ENCODE measurements at regions of chr18 and their contacts with region 1.

Region 1: DNA sequence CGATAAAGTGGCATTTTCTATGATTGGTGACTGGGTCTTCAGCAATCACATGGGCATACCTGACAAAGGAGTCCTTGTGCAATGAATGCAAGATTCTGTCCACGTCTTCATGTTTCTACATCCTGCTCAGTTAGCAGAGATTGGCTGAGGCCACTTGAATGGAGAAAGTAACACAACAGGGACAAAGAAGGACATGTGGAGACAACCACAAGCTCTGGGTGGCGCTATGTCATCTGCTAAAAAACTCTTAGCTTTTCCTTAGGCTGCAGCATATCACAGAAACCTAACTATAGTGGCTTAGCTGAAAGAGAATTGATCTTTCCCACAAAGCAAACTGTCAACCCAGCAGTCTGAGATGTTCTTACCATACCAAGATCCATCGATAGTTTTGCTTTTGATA is 1109.7 kb downstream of the SOCS6 start:
- DNase-seq: peak; percentile 35
- H3K4me3 ChIP-seq: no peak overlapping the region
- H3K27ac ChIP-seq: no peak overlapping the region
- H3K4me1 ChIP-seq: no peaks in the 10 kb centered on the region
- H3K27me3 ChIP-seq: no peaks in the 10 kb centered on the region
- CTCF ChIP-seq: peak; percentile 9 to 51
- POLR2A ChIP-seq: no peak

Region 2: DNA sequence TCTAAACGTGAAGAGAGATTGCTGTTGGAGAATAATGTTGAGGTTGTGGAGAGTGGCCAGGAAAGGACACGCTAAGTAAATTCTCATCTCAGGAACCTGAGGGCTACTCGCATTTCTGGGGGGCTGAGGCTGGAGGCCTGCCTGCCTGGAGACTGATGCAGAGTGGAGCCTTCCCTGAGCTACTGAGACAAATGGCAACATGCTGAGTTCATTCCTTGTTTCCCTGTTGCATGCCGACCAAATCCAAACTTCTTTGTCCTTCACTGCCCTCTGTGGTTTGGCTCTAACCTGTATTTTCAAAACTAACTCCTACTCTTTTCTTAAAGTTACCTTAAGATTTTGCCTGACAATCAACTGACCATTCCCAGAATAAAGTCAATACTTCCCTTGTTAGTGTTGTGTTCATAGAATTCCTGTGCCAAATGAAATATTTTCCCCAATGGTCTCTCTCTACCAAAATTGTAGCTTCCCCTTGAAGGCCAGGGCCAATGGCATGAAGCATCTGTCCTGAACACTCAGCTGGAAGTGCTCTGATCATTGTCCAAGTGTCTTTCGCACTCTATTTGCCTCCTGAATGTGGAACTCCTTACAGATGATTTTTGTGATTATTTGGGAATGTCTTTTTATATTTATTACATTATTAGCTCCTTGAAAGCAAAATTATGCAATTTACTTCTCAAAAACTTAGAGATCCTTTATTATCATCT is 24.1 kb before region 1 on chr18:
- CTCF ChIA-PET with region 1: interaction called, 13 read pairs
- POLR2A ChIA-PET with region 1: no interaction called
- dilution Hi-C with region 1: no loop called
- intact Hi-C with region 1: no loop called
- DNase-seq: no peak
- H3K4me3 ChIP-seq: no peak overlapping the region
- H3K27ac ChIP-seq: no peak overlapping the region
- H3K4me1 ChIP-seq: no peaks in the 10 kb centered on the region
- H3K27me3 ChIP-seq: no peaks in the 10 kb centered on the region
- CTCF ChIP-seq: no peak
- POLR2A ChIP-seq: no peak

Region 3: DNA sequence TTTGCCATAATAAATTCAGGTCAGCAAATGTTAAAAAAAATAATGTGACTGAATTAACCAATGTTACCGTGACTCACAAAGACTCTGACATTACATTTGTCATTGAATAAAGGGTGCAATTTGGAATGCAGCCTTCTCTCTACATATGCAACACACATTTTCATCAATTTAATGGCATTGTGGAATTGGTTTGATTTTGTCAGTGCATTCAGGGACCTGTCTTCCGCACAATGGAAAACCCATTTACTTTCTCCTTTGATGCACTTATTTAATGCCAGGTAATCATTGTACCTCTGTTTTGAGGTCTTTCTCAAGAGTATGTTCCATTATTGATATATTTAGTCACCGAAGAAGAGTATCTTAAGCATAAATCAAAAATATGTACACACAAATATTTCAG is 10.4 kb before region 1 on chr18:
- CTCF ChIA-PET with region 1: interaction called, 14 read pairs
- POLR2A ChIA-PET with region 1: no interaction called
- dilution Hi-C with region 1: no loop called
- intact Hi-C with region 1: no loop called
- DNase-seq: no peak
- H3K4me3 ChIP-seq: no peak overlapping the region
- H3K27ac ChIP-seq: no peak overlapping the region
- H3K4me1 ChIP-seq: no peaks in the 10 kb centered on the region
- H3K27me3 ChIP-seq: no peaks in the 10 kb centered on the region
- CTCF ChIP-seq: no peak
- POLR2A ChIP-seq: no peak

Region 4: GRCh38 chr18:71784777-71785176 is 386.2 kb after region 1 on chr18:
- CTCF ChIA-PET with region 1: interaction called, 27 read pairs
- POLR2A ChIA-PET with region 1: no interaction called
- dilution Hi-C with region 1: no loop called
- intact Hi-C with region 1: loop called (anchors 1 kb)
- DNase-seq: peak; percentile 51
- H3K4me3 ChIP-seq: no peak overlapping the region
- H3K27ac ChIP-seq: no peak overlapping the region
- H3K4me1 ChIP-seq: no peaks in the 10 kb centered on the region
- H3K27me3 ChIP-seq: no peaks in the 10 kb centered on the region
- CTCF ChIP-seq: peak; percentile 41 to 62
- POLR2A ChIP-seq: no peak

Region 5: GRCh38 chr18:72086421-72086820 is 687.9 kb after region 1 on chr18:
- CTCF ChIA-PET with region 1: no interaction called
- POLR2A ChIA-PET with region 1: no interaction called
- dilution Hi-C with region 1: no loop called
- intact Hi-C with region 1: loop called (anchors 1 kb)
- DNase-seq: peak; percentile 39
- H3K4me3 ChIP-seq: no peak overlapping the region
- H3K27ac ChIP-seq: no peak overlapping the region
- H3K4me1 ChIP-seq: no peaks in the 10 kb centered on the region
- H3K27me3 ChIP-seq: no peaks in the 10 kb centered on the region
- CTCF ChIP-seq: peak; percentile 9 to 42
- POLR2A ChIP-seq: no peak